T-cell (primary cell): ENCODE measurements at regions of chr15 and their contacts with region 1.

Region 1: DNA sequence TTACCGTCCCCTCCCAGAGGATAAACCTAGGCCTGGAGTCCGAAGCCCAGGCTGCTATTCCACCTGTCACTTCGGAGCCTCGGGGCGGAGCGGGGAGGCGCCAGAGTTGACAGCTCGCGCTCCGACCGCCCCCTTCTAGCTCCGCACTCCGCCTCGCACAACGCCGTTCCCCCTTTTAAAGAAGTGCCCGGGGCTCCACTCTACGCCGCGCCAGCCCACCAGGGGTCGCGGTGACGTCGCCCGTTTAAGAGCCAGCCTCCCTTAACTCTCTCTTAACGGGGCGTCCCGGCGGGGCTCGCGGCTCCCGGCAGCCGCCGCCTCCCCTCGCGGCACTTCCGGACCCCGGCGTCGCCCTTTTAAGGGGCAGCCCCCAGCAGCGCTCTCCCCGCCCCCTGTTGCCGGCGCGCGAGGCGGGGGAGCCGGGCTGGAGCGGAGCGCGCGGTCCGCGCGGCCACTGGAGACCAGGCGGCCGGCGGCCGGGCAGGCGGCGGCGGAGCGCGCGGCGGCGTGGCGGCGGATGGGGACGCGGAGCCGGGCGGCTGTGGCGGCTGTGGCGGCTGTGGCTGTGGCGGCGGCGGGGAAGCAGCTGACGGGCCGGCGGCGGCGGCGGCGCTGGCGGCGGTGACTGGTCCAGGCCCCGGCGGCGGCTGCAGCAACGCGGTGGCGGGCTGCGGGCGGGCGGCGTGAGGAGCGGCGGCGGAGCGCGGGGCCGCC is at the start of gene INAFM2:
- DNase-seq: peak; percentile 79 to 95 (median 89)
- ATAC-seq: peak; percentile 87 to 90 (median 88)
- H3K4me3 ChIP-seq: peak within 1 kb of the TSS; percentile 50 to 58
- H3K4me3 Mint-ChIP-seq: peak within 1 kb of the TSS; percentile 76 to 81 (median 77)
- H3K27ac ChIP-seq: peak within 1 kb of the TSS; percentile 55
- H3K27ac Mint-ChIP-seq: peak within 1 kb of the TSS; percentile 76 to 83
- H3K4me1 ChIP-seq: peaks cover 6 to 32% of the 10 kb centered on the region in 2 experiments
- H3K4me1 Mint-ChIP-seq: peaks cover 34% of the 10 kb centered on the region in 3 donors
- H3K27me3 ChIP-seq: no peaks in the 10 kb centered on the region
- H3K27me3 Mint-ChIP-seq: peaks cover 0 to 5% of the 10 kb centered on the region in 2 donors
- total RNA-seq, gene INAFM2: 5.5 to 10.9 (median 6.4) TPM

Region 2: GRCh38 chr15:40307421-40308211 is 15.8 kb before region 1 on chr15 and contains the start of gene PLCB2:
- CTCF ChIA-PET with region 1: interaction called, 11 to 35 read pairs
- POLR2A ChIA-PET with region 1: interaction called, 3 to 6 read pairs
- DNase-seq: peak; percentile 49 to 84 (median 71)
- ATAC-seq: peak; percentile 81 to 85 (median 83)
- H3K4me3 ChIP-seq: peak within 1 kb of the TSS; percentile 90 to 98
- H3K4me3 Mint-ChIP-seq: peak within 1 kb of the TSS; percentile 84 to 97 (median 92)
- H3K27ac ChIP-seq: peak within 1 kb of the TSS; percentile 92
- H3K27ac Mint-ChIP-seq: peak within 1 kb of the TSS; percentile 98 to 99
- H3K4me1 ChIP-seq: peaks cover 7 to 58% of the 10 kb centered on the region in 2 experiments
- H3K4me1 Mint-ChIP-seq: peaks cover 43 to 55% (median 51%) of the 10 kb centered on the region in 3 donors
- H3K27me3 ChIP-seq: no peaks in the 10 kb centered on the region
- H3K27me3 Mint-ChIP-seq: no peaks in the 10 kb centered on the region
- total RNA-seq, gene PLCB2: 242 to 293 (median 245) TPM